Naive thymus-derived CD4-positive, alpha-beta T cell (primary cell): ENCODE measurements at regions of chr2 and their contacts with region 1.

Region 1: DNA sequence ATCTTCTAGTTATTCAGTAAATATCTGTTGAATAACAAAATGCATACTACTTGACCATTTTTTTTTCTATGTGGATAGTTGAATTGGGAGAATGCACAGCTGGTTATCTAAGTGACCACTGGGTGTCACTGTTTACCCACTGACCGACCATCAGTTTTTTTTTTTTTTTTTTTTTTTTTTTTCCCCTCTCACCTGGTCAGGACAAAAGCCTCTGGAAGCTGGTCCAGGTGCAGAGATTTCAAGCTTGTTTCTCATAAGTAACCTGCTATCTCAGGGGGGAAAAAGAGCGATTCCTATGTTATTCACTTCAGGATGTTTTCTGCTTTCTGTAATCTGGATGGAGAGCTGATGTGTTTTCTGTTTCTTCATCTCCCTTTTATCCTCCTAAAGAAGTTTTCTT is 256.0 kb downstream of the DCDC2C start:
- DNase-seq: no peak
- ATAC-seq: no peak
- H3K4me3 ChIP-seq: no peak overlapping the region
- H3K4me3 Mint-ChIP-seq: no peak overlapping the region
- H3K27ac ChIP-seq: no peak overlapping the region
- H3K27ac Mint-ChIP-seq: no peak overlapping the region
- H3K4me1 ChIP-seq: no peaks in the 10 kb centered on the region
- H3K4me1 Mint-ChIP-seq: peaks cover 0 to 5% (median 0%) of the 10 kb centered on the region in 7 donors
- H3K27me3 ChIP-seq: no peaks in the 10 kb centered on the region
- H3K27me3 Mint-ChIP-seq: peaks cover 0 to 13% (median 5%) of the 10 kb centered on the region in 5 donors

Region 2: GRCh38 chr2:3041841-3042608 is 917.3 kb before region 1 on chr2:
- CTCF ChIA-PET with region 1: no interaction called
- POLR2A ChIA-PET with region 1: no interaction called
- intact Hi-C with region 1: no loop called
- DNase-seq: no peak
- ATAC-seq: no peak
- H3K4me3 ChIP-seq: no peak overlapping the region
- H3K4me3 Mint-ChIP-seq: no peak overlapping the region
- H3K27ac ChIP-seq: no peak overlapping the region
- H3K27ac Mint-ChIP-seq: no peak overlapping the region
- H3K4me1 ChIP-seq: no peaks in the 10 kb centered on the region
- H3K4me1 Mint-ChIP-seq: peaks cover 0 to 2% (median 0%) of the 10 kb centered on the region in 7 donors
- H3K27me3 ChIP-seq: no peaks in the 10 kb centered on the region
- H3K27me3 Mint-ChIP-seq: peaks cover 0 to 20% (median 4%) of the 10 kb centered on the region in 5 donors

Region 3: GRCh38 chr2:3712831-3713503 is 246.4 kb before region 1 on chr2:
- CTCF ChIA-PET with region 1: no interaction called
- POLR2A ChIA-PET with region 1: no interaction called
- intact Hi-C with region 1: no loop called
- DNase-seq: no peak
- ATAC-seq: no peak
- H3K4me3 ChIP-seq: no peak overlapping the region
- H3K4me3 Mint-ChIP-seq: no peak overlapping the region
- H3K27ac ChIP-seq: no peak overlapping the region
- H3K27ac Mint-ChIP-seq: no peak overlapping the region
- H3K4me1 ChIP-seq: no peaks in the 10 kb centered on the region
- H3K4me1 Mint-ChIP-seq: no peaks in the 10 kb centered on the region
- H3K27me3 ChIP-seq: no peaks in the 10 kb centered on the region
- H3K27me3 Mint-ChIP-seq: peaks cover 0 to 14% (median 4%) of the 10 kb centered on the region in 5 donors

Region 4: GRCh38 chr2:3857576-3857975 is 101.8 kb before region 1 on chr2:
- CTCF ChIA-PET with region 1: no interaction called
- POLR2A ChIA-PET with region 1: no interaction called
- intact Hi-C with region 1: no loop called
- DNase-seq: no peak
- ATAC-seq: no peak
- H3K4me3 ChIP-seq: no peak overlapping the region
- H3K4me3 Mint-ChIP-seq: no peak overlapping the region
- H3K27ac ChIP-seq: no peak overlapping the region
- H3K27ac Mint-ChIP-seq: no peak overlapping the region
- H3K4me1 ChIP-seq: no peaks in the 10 kb centered on the region
- H3K4me1 Mint-ChIP-seq: no peaks in the 10 kb centered on the region
- H3K27me3 ChIP-seq: no peaks in the 10 kb centered on the region
- H3K27me3 Mint-ChIP-seq: peaks cover 0 to 7% (median 0%) of the 10 kb centered on the region in 5 donors

Region 5: GRCh38 chr2:3902131-3902530 is 57.2 kb before region 1 on chr2:
- CTCF ChIA-PET with region 1: no interaction called
- POLR2A ChIA-PET with region 1: no interaction called
- intact Hi-C with region 1: no loop called
- DNase-seq: no peak
- ATAC-seq: no peak
- H3K4me3 ChIP-seq: no peak overlapping the region
- H3K4me3 Mint-ChIP-seq: no peak overlapping the region
- H3K27ac ChIP-seq: no peak overlapping the region
- H3K27ac Mint-ChIP-seq: no peak overlapping the region
- H3K4me1 ChIP-seq: no peaks in the 10 kb centered on the region
- H3K4me1 Mint-ChIP-seq: peaks cover 0 to 2% (median 0%) of the 10 kb centered on the region in 7 donors
- H3K27me3 ChIP-seq: no peaks in the 10 kb centered on the region
- H3K27me3 Mint-ChIP-seq: peaks cover 0 to 23% (median 17%) of the 10 kb centered on the region in 5 donors

Region 6: DNA sequence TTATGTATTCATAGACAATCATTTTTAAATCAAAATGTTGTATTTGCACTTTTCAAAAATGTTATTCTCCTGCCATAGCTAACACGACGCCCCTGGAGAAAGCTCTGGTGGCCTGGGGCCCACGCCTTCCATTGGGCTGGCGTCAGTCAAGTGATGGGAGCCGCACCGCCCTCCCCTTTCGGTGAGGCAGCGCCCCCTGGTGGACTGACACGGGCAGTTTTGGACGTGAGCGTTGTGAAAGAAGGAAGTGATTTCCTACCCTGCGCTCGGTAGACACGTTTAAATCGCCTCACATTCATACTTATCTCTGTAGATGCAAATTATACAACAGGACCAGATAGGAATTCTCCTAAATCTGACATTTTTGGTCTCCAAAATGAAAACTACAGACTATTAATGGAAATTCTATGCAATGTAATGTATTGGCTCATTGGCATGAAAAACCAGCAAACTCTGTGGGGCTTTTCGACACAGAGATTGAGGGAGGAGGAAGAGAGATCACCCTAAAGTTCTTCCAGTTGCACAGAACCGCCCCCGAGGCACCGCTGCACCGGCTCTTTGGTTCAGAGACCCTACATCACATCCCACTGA is 1406.6 kb after region 1 on chr2:
- CTCF ChIA-PET with region 1: no interaction called
- POLR2A ChIA-PET with region 1: no interaction called
- intact Hi-C with region 1: loop called in 1 of 2 experiments (anchors 1 kb)
- DNase-seq: peak in 1 of 9 donors; percentile 69
- ATAC-seq: no peak
- H3K4me3 ChIP-seq: no peak overlapping the region
- H3K4me3 Mint-ChIP-seq: no peak overlapping the region
- H3K27ac ChIP-seq: no peak overlapping the region
- H3K27ac Mint-ChIP-seq: no peak overlapping the region
- H3K4me1 ChIP-seq: no peaks in the 10 kb centered on the region
- H3K4me1 Mint-ChIP-seq: no peaks in the 10 kb centered on the region
- H3K27me3 ChIP-seq: no peaks in the 10 kb centered on the region
- H3K27me3 Mint-ChIP-seq: peaks cover 0 to 4% (median 0%) of the 10 kb centered on the region in 5 donors

Region 7: DNA sequence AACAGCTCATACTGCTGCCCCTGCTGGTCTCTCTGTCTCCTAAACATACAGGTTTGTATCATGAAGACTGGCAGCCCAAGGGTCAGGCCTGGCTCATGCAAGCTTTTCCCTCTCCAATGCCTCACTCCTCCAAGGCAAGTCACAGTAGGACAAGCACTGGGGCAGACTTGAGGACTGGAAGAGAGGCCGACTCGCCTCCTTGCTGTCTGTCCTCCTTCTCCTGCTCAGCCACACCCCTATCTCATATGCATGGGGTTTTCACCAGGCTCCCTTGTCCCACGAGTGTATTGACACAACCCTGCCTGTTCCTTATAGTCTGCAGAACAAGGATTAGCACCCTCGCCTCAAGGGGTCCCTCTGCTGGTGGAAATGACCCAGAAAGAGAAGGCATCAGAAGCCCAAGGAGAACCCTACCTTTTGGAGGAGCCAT is 1956.5 kb after region 1 on chr2:
- CTCF ChIA-PET with region 1: no interaction called
- POLR2A ChIA-PET with region 1: no interaction called
- intact Hi-C with region 1: loop called in 1 of 2 experiments (anchors 5 kb)
- DNase-seq: no peak
- ATAC-seq: no peak
- H3K4me3 ChIP-seq: no peak overlapping the region
- H3K4me3 Mint-ChIP-seq: no peak overlapping the region
- H3K27ac ChIP-seq: no peak overlapping the region
- H3K27ac Mint-ChIP-seq: no peak overlapping the region
- H3K4me1 ChIP-seq: no peaks in the 10 kb centered on the region
- H3K4me1 Mint-ChIP-seq: no peaks in the 10 kb centered on the region
- H3K27me3 ChIP-seq: no peaks in the 10 kb centered on the region
- H3K27me3 Mint-ChIP-seq: peaks cover 0 to 7% (median 0%) of the 10 kb centered on the region in 5 donors